Left cardiac atrium (tissue), 4 donors: ENCODE measurements at regions of chr18 and their contacts with region 1.

Region 1: GRCh38 chr18:27750014-27750413 is 426.9 kb downstream of the CDH2 start:
- DNase-seq: no peak
- ATAC-seq: peak; percentile 67 to 80

Region 2: GRCh38 chr18:27363872-27364271 is 386.1 kb before region 1 on chr18:
- intact Hi-C with region 1: loop called in 1 of 2 experiments (anchors 10 kb)
- DNase-seq: no peak
- ATAC-seq: no peak

Region 3: GRCh38 chr18:27605107-27605834 is 144.7 kb before region 1 on chr18:
- intact Hi-C with region 1: loop called (anchors 2 to 5 kb)
- DNase-seq: peak; percentile 42
- ATAC-seq: peak; percentile 84 to 85

Region 4: DNA sequence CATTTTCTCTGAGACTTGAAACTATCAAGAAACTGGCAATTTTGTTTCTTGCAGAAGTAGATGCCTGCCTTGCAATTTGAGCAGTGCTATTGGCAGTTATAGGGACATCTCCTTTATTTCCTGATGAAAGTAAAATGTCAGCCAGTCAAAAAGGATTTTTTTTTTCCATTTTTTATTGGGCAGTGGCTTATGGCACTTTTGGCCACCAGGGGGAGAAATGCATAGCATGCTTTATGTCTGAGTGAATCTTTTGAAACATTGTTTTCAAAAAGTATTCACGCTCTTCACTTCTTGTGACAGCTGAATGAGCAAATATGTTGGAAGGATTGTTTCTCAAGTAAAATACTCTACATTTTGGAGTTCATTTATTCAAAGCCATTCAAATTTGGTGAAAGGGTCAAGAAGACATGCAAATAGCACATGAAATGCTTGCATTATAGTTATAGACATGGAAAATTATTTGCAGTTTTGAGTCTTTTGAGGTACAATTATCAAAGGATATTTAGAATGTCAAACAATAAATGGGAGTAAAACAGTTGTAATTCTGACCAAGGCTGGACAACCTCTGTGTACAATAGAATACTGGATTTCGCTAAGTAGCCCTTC is 64.1 kb before region 1 on chr18:
- intact Hi-C with region 1: loop called (anchors 2 to 5 kb)
- DNase-seq: no peak
- ATAC-seq: no peak